CD8-positive, alpha-beta T cell (primary cell): ENCODE measurements at regions of chr13 and their contacts with region 1.

Region 1: GRCh38 chr13:45367358-45367757 is 26.4 kb upstream of the TPT1 start:
- DNase-seq: peak; percentile 71 to 98 (median 89)
- ATAC-seq: peak; percentile 98
- H3K4me3 ChIP-seq: no peak overlapping the region
- H3K4me3 Mint-ChIP-seq: peak overlapping the region; percentile 40
- H3K27ac ChIP-seq: peak overlapping the region in 1 of 2 experiments; percentile 66
- H3K27ac Mint-ChIP-seq: peak overlapping the region; percentile 89
- H3K4me1 ChIP-seq: peaks cover 27% of the 10 kb centered on the region
- H3K4me1 Mint-ChIP-seq: peaks cover 49% of the 10 kb centered on the region
- H3K27me3 ChIP-seq: no peaks in the 10 kb centered on the region
- H3K27me3 Mint-ChIP-seq: no peaks in the 10 kb centered on the region
- CTCF ChIP-seq: no peak

Region 2: GRCh38 chr13:45332036-45332830 is 35.1 kb before region 1 on chr13:
- CTCF ChIA-PET with region 1: interaction called, 5 read pairs
- POLR2A ChIA-PET with region 1: interaction called, 3 read pairs
- intact Hi-C with region 1: loop called (anchors 5 kb)
- DNase-seq: no peak
- ATAC-seq: no peak
- H3K4me3 ChIP-seq: no peak overlapping the region
- H3K4me3 Mint-ChIP-seq: no peak overlapping the region
- H3K27ac ChIP-seq: no peak overlapping the region
- H3K27ac Mint-ChIP-seq: peak overlapping the region; percentile 67
- H3K4me1 ChIP-seq: peaks cover 74% of the 10 kb centered on the region
- H3K4me1 Mint-ChIP-seq: peaks cover 89% of the 10 kb centered on the region
- H3K27me3 ChIP-seq: no peaks in the 10 kb centered on the region
- H3K27me3 Mint-ChIP-seq: no peaks in the 10 kb centered on the region
- CTCF ChIP-seq: no peak

Region 3: DNA sequence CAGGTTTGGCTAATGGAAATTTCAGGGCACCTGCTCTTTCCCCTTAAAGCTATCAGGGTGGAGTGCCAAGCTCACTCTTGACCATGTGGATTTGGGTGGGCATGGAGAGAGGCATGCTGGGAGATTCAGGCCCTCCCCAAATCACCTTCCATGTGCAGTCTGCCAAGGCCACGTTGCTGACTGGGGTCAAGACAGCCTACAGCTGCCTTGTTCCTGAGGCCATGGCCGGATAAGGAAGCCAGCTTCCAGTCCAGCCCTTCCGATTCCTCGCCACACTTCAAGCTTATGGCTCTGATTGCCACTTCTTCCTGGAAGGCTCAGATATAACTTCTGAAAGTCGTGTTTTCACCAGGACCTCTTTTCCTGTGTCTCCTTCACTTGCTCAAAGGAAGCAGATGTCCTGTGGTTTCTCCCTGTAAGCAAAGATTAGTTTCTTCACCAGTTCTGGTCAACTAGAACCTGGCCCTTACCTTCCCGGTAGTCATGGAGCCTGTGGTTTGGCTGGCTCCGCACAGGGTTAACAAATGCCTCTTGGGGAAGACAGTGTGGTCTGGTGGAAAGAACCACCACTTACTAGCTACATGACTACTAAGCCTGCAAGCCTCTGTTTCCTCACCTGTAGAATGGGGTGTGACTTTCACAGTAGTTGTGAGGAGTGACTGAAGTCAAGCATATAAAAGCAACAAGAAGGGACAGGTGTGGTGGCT is 10.2 kb before region 1 on chr13:
- CTCF ChIA-PET with region 1: interaction called, 23 read pairs
- POLR2A ChIA-PET with region 1: interaction called, 3 read pairs
- intact Hi-C with region 1: no loop called
- DNase-seq: no peak
- ATAC-seq: no peak
- H3K4me3 ChIP-seq: no peak overlapping the region
- H3K4me3 Mint-ChIP-seq: no peak overlapping the region
- H3K27ac ChIP-seq: peak overlapping the region in 1 of 2 experiments; percentile 8
- H3K27ac Mint-ChIP-seq: peak overlapping the region; percentile 81
- H3K4me1 ChIP-seq: no peaks in the 10 kb centered on the region
- H3K4me1 Mint-ChIP-seq: peaks cover 16% of the 10 kb centered on the region
- H3K27me3 ChIP-seq: no peaks in the 10 kb centered on the region
- H3K27me3 Mint-ChIP-seq: no peaks in the 10 kb centered on the region
- CTCF ChIP-seq: no peak

Region 4: GRCh38 chr13:45406421-45406820 is 39.1 kb after region 1 on chr13:
- CTCF ChIA-PET with region 1: interaction called, 17 read pairs
- POLR2A ChIA-PET with region 1: no interaction called
- intact Hi-C with region 1: no loop called
- DNase-seq: peak in 1 of 9 experiments; percentile 7
- ATAC-seq: no peak
- H3K4me3 ChIP-seq: no peak overlapping the region
- H3K4me3 Mint-ChIP-seq: no peak overlapping the region
- H3K27ac ChIP-seq: no peak overlapping the region
- H3K27ac Mint-ChIP-seq: peak overlapping the region; percentile 18
- H3K4me1 ChIP-seq: no peaks in the 10 kb centered on the region
- H3K4me1 Mint-ChIP-seq: peaks cover 4% of the 10 kb centered on the region
- H3K27me3 ChIP-seq: no peaks in the 10 kb centered on the region
- H3K27me3 Mint-ChIP-seq: no peaks in the 10 kb centered on the region
- CTCF ChIP-seq: no peak

Region 5: GRCh38 chr13:45464687-45465453 is 97.5 kb after region 1 on chr13 and contains the start of gene COG3:
- CTCF ChIA-PET with region 1: interaction called, 13 read pairs
- POLR2A ChIA-PET with region 1: interaction called, 10 read pairs
- intact Hi-C with region 1: loop called (anchors 1 kb)
- DNase-seq: peak; percentile 86 to 98 (median 94)
- ATAC-seq: peak; percentile 94
- H3K4me3 ChIP-seq: peak within 1 kb of the TSS; percentile 77 to 85
- H3K4me3 Mint-ChIP-seq: peak within 1 kb of the TSS; percentile 92
- H3K27ac ChIP-seq: peak within 1 kb of the TSS; percentile 82 to 95
- H3K27ac Mint-ChIP-seq: peak within 1 kb of the TSS; percentile 91
- H3K4me1 ChIP-seq: peaks cover 38% of the 10 kb centered on the region
- H3K4me1 Mint-ChIP-seq: peaks cover 49% of the 10 kb centered on the region
- H3K27me3 ChIP-seq: no peaks in the 10 kb centered on the region
- H3K27me3 Mint-ChIP-seq: no peaks in the 10 kb centered on the region
- CTCF ChIP-seq: peak; percentile 6
- total RNA-seq, gene COG3: 45.9 to 47.6 TPM

Region 6: GRCh38 chr13:45482571-45483173 is 115.3 kb after region 1 on chr13:
- CTCF ChIA-PET with region 1: interaction called, 17 read pairs
- POLR2A ChIA-PET with region 1: no interaction called
- intact Hi-C with region 1: no loop called
- DNase-seq: no peak
- ATAC-seq: no peak
- H3K4me3 ChIP-seq: no peak overlapping the region
- H3K4me3 Mint-ChIP-seq: no peak overlapping the region
- H3K27ac ChIP-seq: no peak overlapping the region
- H3K27ac Mint-ChIP-seq: peak overlapping the region; percentile 53
- H3K4me1 ChIP-seq: no peaks in the 10 kb centered on the region
- H3K4me1 Mint-ChIP-seq: peaks cover 8% of the 10 kb centered on the region
- H3K27me3 ChIP-seq: no peaks in the 10 kb centered on the region
- H3K27me3 Mint-ChIP-seq: no peaks in the 10 kb centered on the region
- CTCF ChIP-seq: no peak